GM12878 (cell line): ENCODE measurements at regions of chr14 and their contacts with region 1.

Region 1: GRCh38 chr14:65321370-65321875 is 91.1 kb upstream of the FUT8 start:
- DNase-seq: peak; percentile 82
- ATAC-seq: peak; percentile 51
- H3K4me3 ChIP-seq: no peak overlapping the region
- H3K27ac ChIP-seq: peak overlapping the region; percentile 94
- H3K4me1 ChIP-seq: peaks cover 47% of the 10 kb centered on the region
- H3K27me3 ChIP-seq: no peaks in the 10 kb centered on the region
- CTCF ChIP-seq: no peak
- EP300 ChIP-seq: peak in 1 of 2 experiments; percentile 35; a peak in 1 of 4 replicates
- POLR2A ChIP-seq: peak; percentile 37; the same call in 1 of the 2 replicates
- RAD21 ChIP-seq: peak; percentile 11; the same call in 1 of the 2 replicates

Region 2: DNA sequence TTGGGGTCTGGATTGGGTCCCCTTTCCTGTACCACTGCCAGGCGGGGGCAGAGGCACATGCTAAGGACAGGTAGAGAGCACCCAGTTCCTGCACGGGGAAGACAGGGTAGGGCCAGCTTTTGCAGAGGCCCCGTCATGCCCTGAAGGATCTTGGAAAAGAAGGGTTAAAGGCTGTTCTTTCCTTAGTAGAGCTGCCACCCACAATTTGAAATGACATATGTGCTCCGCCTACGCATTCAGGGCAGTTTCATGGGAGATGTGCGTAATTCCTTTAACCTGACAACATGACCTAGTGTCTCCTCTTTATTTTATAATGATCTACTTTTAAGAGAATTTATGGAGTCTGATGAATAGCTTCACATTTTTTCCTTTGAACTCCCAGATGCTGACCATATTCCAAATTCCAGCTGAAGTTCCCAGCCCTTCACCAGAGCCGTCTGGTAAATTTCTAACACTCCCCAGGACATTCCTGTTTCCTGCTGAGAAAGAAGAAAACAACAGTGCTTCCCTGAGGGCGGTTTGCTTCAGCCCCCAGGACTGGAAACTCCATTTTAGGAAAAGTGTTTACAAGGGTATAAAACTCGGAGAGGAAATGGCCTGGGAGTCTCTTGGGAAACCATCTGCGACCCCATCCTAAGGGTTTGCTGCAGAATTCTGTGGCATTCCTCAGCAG is 676.1 kb before region 1 on chr14:
- CTCF ChIA-PET with region 1: no interaction called
- POLR2A ChIA-PET with region 1: no interaction called
- RAD21 ChIA-PET with region 1: no interaction called
- SMC1A ChIA-PET with region 1: no interaction called
- in situ Hi-C with region 1: no loop called
- intact Hi-C with region 1: no loop called
- DNase-seq: no peak
- ATAC-seq: no peak
- H3K4me3 ChIP-seq: no peak overlapping the region
- H3K27ac ChIP-seq: no peak overlapping the region
- H3K4me1 ChIP-seq: no peaks in the 10 kb centered on the region
- H3K27me3 ChIP-seq: no peaks in the 10 kb centered on the region
- CTCF ChIP-seq: no peak
- EP300 ChIP-seq: no peak
- POLR2A ChIP-seq: no peak
- RAD21 ChIP-seq: no peak

Region 3: DNA sequence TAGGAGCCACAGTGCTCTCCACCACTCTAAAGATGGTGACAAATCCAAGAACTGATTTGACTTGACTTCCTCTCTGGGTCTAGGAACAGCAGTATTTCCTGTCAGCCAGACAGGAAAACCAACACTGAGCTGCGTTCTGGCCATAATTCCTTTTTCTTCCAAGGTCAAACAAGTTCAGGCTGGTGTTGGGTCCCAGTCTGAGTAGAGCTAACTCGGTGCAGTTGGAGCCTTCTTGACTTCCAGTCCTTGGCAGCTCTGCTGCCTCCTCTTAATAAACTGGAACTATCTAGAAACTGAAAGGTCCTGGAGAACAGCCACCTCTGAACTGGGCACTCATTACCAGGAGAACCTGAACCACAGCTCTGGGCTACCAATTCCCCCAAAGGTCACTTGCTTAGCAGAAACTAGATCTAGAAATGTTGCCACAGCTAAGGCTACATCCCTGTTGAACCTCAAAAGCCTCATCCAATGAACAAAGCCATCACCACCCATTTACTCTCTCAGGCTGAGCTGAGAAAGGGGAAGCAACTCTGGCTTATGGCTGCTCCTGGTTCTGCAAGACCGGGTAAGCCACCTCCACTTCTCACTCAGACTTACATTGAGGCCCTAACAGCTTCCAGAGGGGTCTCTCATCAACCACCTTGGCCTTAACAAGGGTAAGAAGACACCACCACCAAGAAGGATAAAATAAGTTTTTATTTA is 246.8 kb before region 1 on chr14:
- CTCF ChIA-PET with region 1: no interaction called
- POLR2A ChIA-PET with region 1: no interaction called
- RAD21 ChIA-PET with region 1: no interaction called
- SMC1A ChIA-PET with region 1: no interaction called
- in situ Hi-C with region 1: no loop called
- intact Hi-C with region 1: no loop called
- DNase-seq: no peak
- ATAC-seq: peak; percentile 51
- H3K4me3 ChIP-seq: no peak overlapping the region
- H3K27ac ChIP-seq: 0 out of 2 replicates have a peak overlapping the region, but pooled peaks have one; percentile 6
- H3K4me1 ChIP-seq: no peaks in the 10 kb centered on the region
- H3K27me3 ChIP-seq: no peaks in the 10 kb centered on the region
- CTCF ChIP-seq: no peak
- EP300 ChIP-seq: no peak
- POLR2A ChIP-seq: no peak
- RAD21 ChIP-seq: no peak

Region 4: DNA sequence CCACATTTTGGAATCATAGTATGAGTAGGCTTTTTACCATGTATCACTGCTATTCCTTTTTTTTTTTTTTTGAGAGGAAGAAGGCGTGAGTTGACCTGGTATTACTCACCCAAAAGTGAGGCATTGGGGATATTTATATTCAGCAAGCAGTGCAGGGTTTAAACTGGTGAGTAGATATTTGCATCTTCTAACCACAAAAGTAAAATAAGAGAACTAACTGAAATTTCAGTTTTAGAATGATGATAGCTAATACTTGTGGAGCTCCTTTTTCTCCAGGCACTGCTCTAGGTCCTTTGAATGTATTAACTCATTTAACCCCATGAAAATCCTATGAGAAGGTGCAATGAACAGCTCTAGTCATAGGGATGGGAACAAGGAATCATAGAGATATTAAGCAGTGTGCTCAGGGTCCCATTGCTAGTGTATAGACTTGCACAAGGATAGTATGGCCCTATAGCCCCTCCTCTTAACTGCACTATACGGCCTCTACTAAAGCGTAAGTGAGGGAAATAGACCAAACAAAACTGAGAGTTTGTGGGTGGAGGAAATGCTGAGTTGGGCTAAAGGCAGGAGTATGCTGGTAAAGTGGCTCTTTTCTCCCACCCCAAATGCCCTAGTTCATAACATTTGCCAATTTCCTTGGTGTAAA is 114.9 kb before region 1 on chr14:
- CTCF ChIA-PET with region 1: interaction called, 3 read pairs
- POLR2A ChIA-PET with region 1: no interaction called
- RAD21 ChIA-PET with region 1: interaction called, 5 read pairs
- SMC1A ChIA-PET with region 1: interaction called, 11 read pairs
- in situ Hi-C with region 1: no loop called
- intact Hi-C with region 1: no loop called
- DNase-seq: peak; percentile 88
- ATAC-seq: peak; percentile 83
- H3K4me3 ChIP-seq: peak overlapping the region; percentile 56
- H3K27ac ChIP-seq: peak overlapping the region; percentile 96
- H3K4me1 ChIP-seq: peaks cover 63% of the 10 kb centered on the region
- H3K27me3 ChIP-seq: no peaks in the 10 kb centered on the region
- CTCF ChIP-seq: no peak
- EP300 ChIP-seq: peak; percentile 56 to 70; a peak in 3 of 4 replicates
- POLR2A ChIP-seq: peak; percentile 33; the same call in 1 of the 2 replicates
- RAD21 ChIP-seq: no peak

Region 5: DNA sequence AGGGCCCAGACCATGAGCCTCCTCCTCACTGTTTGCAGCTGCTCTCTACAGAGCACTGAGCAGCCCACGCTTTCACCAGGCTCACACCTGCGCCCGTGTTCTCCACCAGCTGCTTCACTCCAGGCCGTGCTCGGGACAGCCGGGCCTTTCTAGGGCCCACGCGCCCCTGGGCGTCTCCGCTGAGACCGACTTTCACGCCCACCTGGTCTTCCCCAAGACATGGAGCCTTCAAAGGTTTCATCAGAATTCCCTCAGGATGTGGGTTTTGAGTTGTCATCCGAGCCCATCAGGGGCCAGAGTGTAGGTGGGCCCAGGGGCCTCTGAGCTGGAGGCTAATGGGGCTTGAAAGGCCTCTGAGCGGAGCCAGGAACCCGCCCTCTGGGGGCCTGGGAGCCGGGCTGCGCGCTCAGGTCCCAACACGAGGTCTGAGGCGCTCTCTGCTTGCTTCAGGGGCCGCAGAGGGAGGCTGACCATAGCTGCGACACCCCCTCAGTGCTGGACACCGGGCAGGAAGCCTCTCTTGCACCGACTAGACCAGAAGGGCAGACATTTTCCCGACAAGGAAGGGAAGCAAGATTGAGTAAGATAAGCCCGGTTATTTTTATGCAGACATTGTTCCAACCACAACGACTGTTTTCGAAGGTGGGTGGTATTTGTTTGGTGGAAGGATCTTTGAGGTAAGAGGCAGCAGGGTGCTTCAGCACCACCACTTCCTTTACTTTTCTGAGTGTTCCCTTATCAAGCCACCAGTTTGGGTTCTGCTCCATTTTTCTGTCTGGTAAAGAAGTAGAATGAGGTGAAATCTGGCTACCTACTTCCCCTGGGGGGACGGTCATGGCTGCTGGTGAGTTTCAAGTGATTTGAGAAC is 33.9 kb before region 1 on chr14:
- CTCF ChIA-PET with region 1: interaction called, 67 read pairs
- POLR2A ChIA-PET with region 1: interaction called, 8 read pairs
- RAD21 ChIA-PET with region 1: interaction called, 74 read pairs
- SMC1A ChIA-PET with region 1: interaction called, 66 read pairs
- in situ Hi-C with region 1: no loop called
- intact Hi-C with region 1: no loop called
- DNase-seq: no peak
- ATAC-seq: peak; percentile 77
- H3K4me3 ChIP-seq: peak overlapping the region; percentile 53
- H3K27ac ChIP-seq: peak overlapping the region; percentile 98
- H3K4me1 ChIP-seq: peaks cover 77% of the 10 kb centered on the region
- H3K27me3 ChIP-seq: no peaks in the 10 kb centered on the region
- CTCF ChIP-seq: peak in 2 of 3 experiments; percentile 2 to 6; a peak in 1 of 6 replicates
- EP300 ChIP-seq: peak; percentile 51 to 55; a peak in 2 of 4 replicates
- POLR2A ChIP-seq: peak; percentile 75
- RAD21 ChIP-seq: no peak; the same call in 1 of the 2 replicates

Region 6: GRCh38 chr14:65336191-65336591 is 14.8 kb after region 1 on chr14:
- CTCF ChIA-PET with region 1: interaction called, 29 read pairs
- POLR2A ChIA-PET with region 1: interaction called, 5 read pairs
- RAD21 ChIA-PET with region 1: interaction called, 40 read pairs
- SMC1A ChIA-PET with region 1: interaction called, 82 read pairs
- in situ Hi-C with region 1: no loop called
- intact Hi-C with region 1: no loop called
- DNase-seq: no peak
- ATAC-seq: peak; percentile 83
- H3K4me3 ChIP-seq: no peak overlapping the region; the same call in 1 of the 2 replicates
- H3K27ac ChIP-seq: peak overlapping the region; percentile 41
- H3K4me1 ChIP-seq: peaks cover 36% of the 10 kb centered on the region
- H3K27me3 ChIP-seq: no peaks in the 10 kb centered on the region
- CTCF ChIP-seq: no peak
- EP300 ChIP-seq: no peak
- POLR2A ChIP-seq: peak; percentile 35; the same call in 1 of the 2 replicates
- RAD21 ChIP-seq: peak; percentile 19; the same call in 1 of the 2 replicates

Region 7: DNA sequence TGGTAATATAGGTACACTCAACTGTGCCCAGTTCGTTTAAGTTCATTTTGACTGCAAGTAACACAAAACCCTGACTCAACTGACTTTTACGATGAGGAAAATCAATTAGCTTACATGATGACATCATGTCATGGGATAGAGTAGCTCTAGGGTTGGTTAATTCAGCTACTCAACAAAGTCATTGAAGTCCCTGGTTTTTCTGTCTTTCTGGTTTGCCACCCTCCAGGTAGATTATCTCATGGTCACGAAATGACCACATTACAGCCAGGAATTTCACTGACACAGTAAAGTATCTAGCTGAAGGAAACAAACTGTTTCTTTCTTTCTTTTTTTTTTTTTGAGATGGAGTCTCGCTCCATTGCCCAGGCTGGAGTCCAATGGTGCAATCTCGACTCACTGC is 22.6 kb after region 1 on chr14:
- CTCF ChIA-PET with region 1: interaction called, 9 read pairs
- POLR2A ChIA-PET with region 1: interaction called, 3 read pairs
- RAD21 ChIA-PET with region 1: interaction called, 4 read pairs
- SMC1A ChIA-PET with region 1: interaction called, 135 read pairs
- in situ Hi-C with region 1: no loop called
- intact Hi-C with region 1: no loop called
- DNase-seq: no peak
- ATAC-seq: no peak
- H3K4me3 ChIP-seq: no peak overlapping the region
- H3K27ac ChIP-seq: no peak overlapping the region
- H3K4me1 ChIP-seq: no peaks in the 10 kb centered on the region
- H3K27me3 ChIP-seq: no peaks in the 10 kb centered on the region
- CTCF ChIP-seq: no peak
- EP300 ChIP-seq: no peak
- POLR2A ChIP-seq: no peak
- RAD21 ChIP-seq: no peak

Region 8: DNA sequence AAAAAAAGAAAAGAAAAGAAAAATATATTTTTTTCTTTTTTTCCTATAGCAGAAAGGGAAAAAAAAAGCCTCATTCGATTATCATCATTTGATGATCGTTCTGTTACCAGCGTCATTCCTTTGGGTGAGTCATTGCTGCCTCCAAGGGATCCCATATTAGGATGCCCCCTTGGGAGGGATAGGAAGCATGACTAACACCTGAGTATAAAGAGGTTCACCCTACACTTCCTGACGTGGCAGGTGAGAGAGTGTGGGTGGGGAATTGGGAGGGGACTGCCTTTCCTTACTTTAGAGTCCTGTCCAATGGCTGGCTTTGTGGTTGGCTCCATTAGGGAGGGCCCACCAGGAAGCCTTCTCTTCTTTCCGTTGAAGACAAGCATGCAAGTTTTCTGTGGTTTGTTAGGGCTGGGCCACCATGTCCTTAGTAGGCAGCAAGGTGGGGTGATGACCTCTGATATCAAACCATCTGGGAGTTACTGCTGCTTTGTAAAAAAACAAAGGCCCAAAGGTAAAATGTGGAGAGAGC is 35.0 kb after region 1 on chr14:
- CTCF ChIA-PET with region 1: interaction called, 25 read pairs
- POLR2A ChIA-PET with region 1: interaction called, 29 read pairs
- RAD21 ChIA-PET with region 1: interaction called, 91 read pairs
- SMC1A ChIA-PET with region 1: interaction called, 135 read pairs
- in situ Hi-C with region 1: no loop called
- intact Hi-C with region 1: loop called (anchors 1 kb)
- DNase-seq: no peak
- ATAC-seq: no peak
- H3K4me3 ChIP-seq: no peak overlapping the region
- H3K27ac ChIP-seq: peak overlapping the region; percentile 72
- H3K4me1 ChIP-seq: peaks cover 64% of the 10 kb centered on the region
- H3K27me3 ChIP-seq: no peaks in the 10 kb centered on the region
- CTCF ChIP-seq: no peak
- EP300 ChIP-seq: no peak
- POLR2A ChIP-seq: no peak
- RAD21 ChIP-seq: no peak

Region 9: GRCh38 chr14:65361920-65362319 is 40.5 kb after region 1 on chr14:
- CTCF ChIA-PET with region 1: interaction called, 5 read pairs
- POLR2A ChIA-PET with region 1: no interaction called
- RAD21 ChIA-PET with region 1: interaction called, 91 read pairs
- SMC1A ChIA-PET with region 1: interaction called, 135 read pairs
- in situ Hi-C with region 1: no loop called
- intact Hi-C with region 1: no loop called
- DNase-seq: no peak
- ATAC-seq: no peak
- H3K4me3 ChIP-seq: no peak overlapping the region
- H3K27ac ChIP-seq: no peak overlapping the region
- H3K4me1 ChIP-seq: peaks cover 24% of the 10 kb centered on the region
- H3K27me3 ChIP-seq: no peaks in the 10 kb centered on the region
- CTCF ChIP-seq: no peak
- EP300 ChIP-seq: no peak
- POLR2A ChIP-seq: no peak
- RAD21 ChIP-seq: no peak